AG04449 (cell line): ENCODE measurements at regions of chr2 and their contacts with region 1.

Region 1: GRCh38 chr2:215920244-215921100 is 92.9 kb downstream of the MREG start:
- DNase-seq: peak; percentile 47
- H3K4me3 ChIP-seq: no peak overlapping the region
- CTCF ChIP-seq: peak; percentile 75

Region 2: GRCh38 chr2:215425021-215425782 is 495.3 kb before region 1 on chr2:
- CTCF ChIA-PET with region 1: interaction called, 21 read pairs
- POLR2A ChIA-PET with region 1: no interaction called
- DNase-seq: no peak
- H3K4me3 ChIP-seq: no peak overlapping the region; the same call in 1 of the 2 replicates
- CTCF ChIP-seq: no peak

Region 3: DNA sequence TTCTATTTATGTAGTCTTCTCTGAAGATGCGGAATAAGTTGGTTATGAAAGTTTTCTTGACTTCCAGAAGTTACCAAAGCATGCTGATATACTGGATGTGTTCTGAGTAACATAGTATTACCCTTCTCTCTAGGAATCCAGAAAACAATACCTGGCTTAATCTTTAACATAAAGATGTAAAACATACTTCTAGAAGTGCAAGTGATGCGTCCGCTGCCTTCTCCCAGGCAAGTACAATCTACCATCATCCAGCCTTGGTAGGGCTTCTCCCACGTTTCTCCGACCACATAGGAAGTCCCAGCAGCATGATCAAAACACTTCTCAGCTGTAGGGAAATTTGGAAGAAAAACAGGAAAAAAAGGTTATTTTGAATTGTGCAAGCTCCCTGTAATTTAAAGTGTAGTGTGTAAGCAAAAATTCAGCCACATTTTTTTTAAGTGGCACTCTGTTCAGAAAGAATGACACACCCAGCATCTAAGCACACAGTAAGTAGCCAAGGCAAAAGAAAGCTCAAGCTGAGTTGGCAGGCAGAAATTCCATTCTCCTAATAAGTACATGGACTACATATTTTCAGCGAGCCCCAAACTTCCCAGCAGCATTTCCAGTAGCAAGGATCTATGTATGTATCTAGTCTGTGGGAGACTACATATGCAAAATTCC is 489.8 kb before region 1 on chr2:
- CTCF ChIA-PET with region 1: interaction called, 21 read pairs
- POLR2A ChIA-PET with region 1: interaction called, 9 read pairs
- DNase-seq: peak; percentile 59
- H3K4me3 ChIP-seq: peak overlapping the region; percentile 91
- CTCF ChIP-seq: no peak

Region 4: GRCh38 chr2:215454519-215455246 is 465.8 kb before region 1 on chr2:
- CTCF ChIA-PET with region 1: interaction called, 10 read pairs
- POLR2A ChIA-PET with region 1: no interaction called
- DNase-seq: no peak
- H3K4me3 ChIP-seq: no peak overlapping the region
- CTCF ChIP-seq: peak; percentile 55

Region 5: DNA sequence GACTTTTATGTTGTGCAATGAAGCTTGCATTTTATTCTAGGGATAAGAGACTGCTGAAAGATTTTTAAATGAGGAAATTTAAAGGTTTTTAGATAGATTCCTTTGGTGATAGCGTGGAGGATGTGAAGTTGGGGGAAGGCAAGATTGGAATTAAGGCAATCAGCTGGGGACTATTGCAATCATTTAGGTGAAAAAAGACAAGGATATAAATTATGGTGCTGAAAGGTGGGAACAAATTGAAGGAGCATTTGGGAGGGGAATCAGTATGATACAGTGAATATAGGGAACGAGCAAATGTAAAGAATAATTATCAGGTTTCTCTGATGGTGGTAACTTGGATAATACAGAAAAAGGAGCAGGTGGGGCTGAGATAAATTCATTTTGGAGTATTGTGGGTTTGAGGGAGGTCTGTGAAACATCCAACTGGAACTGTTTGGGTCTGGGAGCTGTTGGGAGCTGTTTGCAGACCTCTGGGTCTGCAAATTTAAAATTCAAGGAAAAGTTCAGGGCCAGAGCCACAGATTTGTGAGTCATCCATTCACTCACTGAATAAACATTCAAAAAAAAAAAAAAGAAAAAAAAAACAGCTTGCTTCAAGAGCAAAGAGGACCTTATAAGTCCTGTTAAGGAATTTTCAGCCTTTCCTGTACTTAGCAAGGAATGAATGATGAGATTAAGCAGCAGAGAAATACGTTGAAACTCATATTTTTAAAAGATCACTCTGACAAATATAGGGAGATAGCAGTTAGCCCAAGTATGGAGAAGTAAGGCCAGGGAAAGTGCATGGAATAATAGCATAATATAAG is 227.1 kb before region 1 on chr2:
- CTCF ChIA-PET with region 1: interaction called, 20 read pairs
- POLR2A ChIA-PET with region 1: no interaction called
- DNase-seq: peak; percentile 80
- H3K4me3 ChIP-seq: no peak overlapping the region
- CTCF ChIP-seq: no peak